ENCODE measurements at regions of chr1 and their contacts with region 1.

Region 1: DNA sequence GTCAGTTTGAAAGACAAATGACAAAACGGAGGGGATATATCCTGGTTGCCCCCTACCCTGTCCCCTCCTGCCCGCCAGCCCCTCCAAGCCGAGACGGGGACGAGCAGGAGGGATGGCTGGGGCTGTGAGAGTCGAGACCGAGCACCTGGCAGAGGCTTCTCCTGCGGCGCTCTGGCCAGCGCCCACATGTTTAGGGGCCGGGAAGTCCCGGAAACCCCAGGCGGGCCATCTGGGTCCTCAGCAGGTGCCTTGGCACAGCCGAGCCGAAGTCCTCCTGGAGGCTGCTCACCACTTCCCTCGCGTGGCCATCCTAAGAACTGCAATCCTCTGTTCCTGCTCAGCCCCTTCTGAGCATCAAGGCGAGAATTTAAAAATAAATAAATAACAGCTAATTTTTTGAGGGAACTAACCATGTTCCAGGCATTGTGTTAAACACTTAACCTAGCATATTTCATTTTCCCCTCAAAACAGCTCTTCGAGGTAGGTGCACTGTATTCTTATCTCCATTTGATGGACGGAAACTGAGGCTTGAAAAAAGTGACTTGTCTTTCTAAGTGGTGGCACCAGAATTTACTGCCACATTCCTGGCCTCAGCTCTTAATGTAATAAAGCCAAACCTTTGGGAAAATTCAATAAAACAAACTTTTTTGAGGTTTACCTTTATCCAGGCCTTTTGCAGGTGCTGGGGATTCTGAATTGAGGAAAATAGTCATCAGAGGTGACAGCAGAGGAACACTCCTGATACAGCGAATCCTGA is 3.5 kb upstream of the RIMS3 start:
- DNase-seq: peak; percentile 95
- H3K4me3 Mint-ChIP-seq: peak overlapping the region; percentile 70
- H3K27ac Mint-ChIP-seq: peak overlapping the region; percentile 15
- H3K4me1 Mint-ChIP-seq: peaks cover 13% of the 10 kb centered on the region
- H3K27me3 Mint-ChIP-seq: peaks cover 14% of the 10 kb centered on the region

Region 2: DNA sequence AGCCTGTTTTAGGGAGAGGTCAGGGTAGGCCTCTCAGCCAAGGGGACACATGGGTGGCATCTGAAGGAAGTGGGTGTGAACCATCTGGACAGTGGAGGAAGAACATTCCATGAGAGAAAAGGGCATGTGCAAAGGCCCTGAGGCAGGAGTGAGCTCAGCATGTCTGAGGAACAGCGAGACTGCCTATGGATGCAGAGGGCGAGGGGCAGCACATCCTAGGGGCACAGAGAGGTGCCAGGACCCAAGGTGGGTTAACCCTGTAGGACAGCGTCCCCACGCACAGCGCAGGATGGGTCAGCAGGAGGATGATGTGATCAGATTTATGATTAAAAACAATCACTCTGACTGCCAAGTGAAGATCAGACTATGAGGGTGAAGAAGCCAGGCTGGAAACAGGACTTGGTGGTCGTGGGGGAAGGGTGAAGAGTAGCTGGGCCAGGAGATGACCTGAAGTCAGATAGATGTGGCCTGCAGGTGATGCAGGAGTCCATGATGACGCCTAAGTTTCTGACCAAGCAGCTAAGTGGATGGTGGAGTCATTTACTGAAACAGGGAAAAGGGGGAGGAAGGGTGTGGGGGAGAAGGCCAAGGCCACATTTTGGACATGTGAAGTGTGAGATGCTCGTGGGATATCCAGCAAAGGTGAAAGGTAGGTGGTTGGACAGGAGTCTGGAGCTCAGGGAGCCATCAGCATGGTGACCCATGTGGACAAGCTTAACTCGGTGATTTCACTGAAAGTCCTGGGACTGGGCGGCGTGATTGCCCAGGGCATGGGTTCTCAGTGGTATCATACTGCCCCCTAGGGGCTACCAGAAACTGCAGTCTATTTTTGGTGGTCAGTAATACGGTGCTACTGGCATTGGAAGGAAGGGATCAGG is 1130.1 kb before region 1 on chr1:
- intact Hi-C with region 1: no loop called
- DNase-seq: peak; percentile 84
- H3K4me3 Mint-ChIP-seq: no peak overlapping the region
- H3K27ac Mint-ChIP-seq: peak overlapping the region; percentile 36
- H3K4me1 Mint-ChIP-seq: peaks cover 2% of the 10 kb centered on the region
- H3K27me3 Mint-ChIP-seq: no peaks in the 10 kb centered on the region

Region 3: DNA sequence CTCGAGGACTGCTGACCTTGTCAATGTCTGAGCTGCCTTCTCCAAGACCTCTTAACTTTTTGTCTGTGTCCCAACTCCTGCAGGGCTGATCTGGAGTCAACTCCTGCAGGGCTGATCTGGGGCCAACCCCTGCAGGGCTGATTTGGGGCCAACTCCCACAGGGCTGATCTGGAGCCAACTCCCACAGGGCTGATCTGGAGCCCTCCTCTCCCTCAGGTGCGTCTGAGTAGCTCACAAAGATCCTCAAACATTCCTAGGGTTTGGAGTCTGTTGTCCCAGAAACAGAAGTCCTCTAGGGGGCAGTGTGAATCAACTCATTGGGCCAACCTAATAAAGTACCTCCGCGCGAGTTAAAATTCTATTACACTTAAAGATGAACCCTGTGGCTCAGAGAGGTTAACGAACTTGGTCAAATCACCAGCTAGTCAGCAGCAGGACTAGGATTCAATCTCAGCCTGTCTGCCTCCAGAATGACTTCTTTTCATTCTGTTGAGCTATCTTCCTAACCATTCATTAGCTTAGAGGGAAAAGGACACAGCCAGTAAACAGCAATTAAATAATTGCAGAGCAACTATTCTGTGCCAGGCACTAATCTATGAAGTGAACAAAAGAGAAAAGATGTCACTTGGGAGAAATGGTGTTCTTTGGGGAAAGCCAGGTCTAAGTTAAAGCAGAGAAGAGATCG is 524.9 kb before region 1 on chr1:
- intact Hi-C with region 1: loop called (anchors 10 kb)
- DNase-seq: peak; percentile 88
- H3K4me3 Mint-ChIP-seq: no peak overlapping the region
- H3K27ac Mint-ChIP-seq: no peak overlapping the region
- H3K4me1 Mint-ChIP-seq: peaks cover 19% of the 10 kb centered on the region
- H3K27me3 Mint-ChIP-seq: peaks cover 54% of the 10 kb centered on the region

Region 4: GRCh38 chr1:40583980-40584379 is 85.0 kb before region 1 on chr1:
- intact Hi-C with region 1: no loop called
- DNase-seq: no peak
- H3K4me3 Mint-ChIP-seq: no peak overlapping the region
- H3K27ac Mint-ChIP-seq: no peak overlapping the region
- H3K4me1 Mint-ChIP-seq: peaks cover 4% of the 10 kb centered on the region
- H3K27me3 Mint-ChIP-seq: peaks cover 18% of the 10 kb centered on the region

Region 5: GRCh38 chr1:40612345-40612831 is 56.6 kb before region 1 on chr1:
- intact Hi-C with region 1: loop called (anchors 1 kb)
- DNase-seq: peak; percentile 93
- H3K4me3 Mint-ChIP-seq: no peak overlapping the region
- H3K27ac Mint-ChIP-seq: no peak overlapping the region
- H3K4me1 Mint-ChIP-seq: no peaks in the 10 kb centered on the region
- H3K27me3 Mint-ChIP-seq: peaks cover 5% of the 10 kb centered on the region

Region 6: GRCh38 chr1:40625066-40625465 is 43.9 kb before region 1 on chr1:
- intact Hi-C with region 1: loop called (anchors 5 kb)
- DNase-seq: no peak
- H3K4me3 Mint-ChIP-seq: no peak overlapping the region
- H3K27ac Mint-ChIP-seq: no peak overlapping the region
- H3K4me1 Mint-ChIP-seq: peaks cover 13% of the 10 kb centered on the region
- H3K27me3 Mint-ChIP-seq: no peaks in the 10 kb centered on the region

Region 7: DNA sequence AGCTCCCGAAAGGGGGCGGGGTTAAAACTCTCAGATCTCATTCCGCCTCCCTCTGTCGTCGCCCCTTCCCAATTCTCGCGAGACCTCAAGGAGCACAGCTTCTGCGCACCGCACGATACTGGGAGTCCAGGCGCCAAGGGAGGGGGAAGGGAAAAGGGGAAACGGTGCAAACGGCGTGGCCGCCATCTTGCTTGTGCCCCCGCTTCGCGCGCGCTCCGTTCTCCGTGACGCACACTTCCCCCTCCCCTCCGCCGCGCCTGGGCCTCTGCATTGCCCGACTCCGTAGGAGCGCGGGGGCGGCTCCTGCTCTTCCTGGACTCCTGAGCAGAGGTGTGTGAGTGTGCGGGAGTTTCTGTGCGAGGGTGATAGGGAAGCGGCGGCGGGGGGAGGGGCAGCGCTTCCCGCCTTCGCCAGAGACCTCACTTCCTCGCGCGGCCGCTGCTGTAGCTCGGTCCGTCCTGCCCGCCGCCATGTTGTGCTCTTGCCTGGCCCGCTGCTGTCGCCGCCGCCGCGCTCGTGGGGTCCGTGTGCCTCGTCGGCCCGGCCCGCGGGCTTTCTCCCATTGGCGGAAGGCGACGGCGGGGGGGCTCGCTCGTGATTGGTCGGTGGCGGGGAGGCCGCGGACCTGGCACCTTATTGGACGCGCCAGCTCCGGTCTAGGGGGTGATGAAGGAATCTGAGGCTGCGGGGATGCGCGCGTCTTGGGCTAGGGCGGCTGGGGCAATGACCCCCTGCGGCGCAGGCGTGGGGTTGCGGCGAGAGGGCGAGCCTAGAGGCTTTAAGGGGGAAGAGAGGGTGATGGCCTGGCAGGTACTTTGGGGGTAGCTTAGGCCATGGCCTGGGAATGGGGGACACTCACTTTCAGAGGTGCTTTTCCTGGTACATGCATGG is 22.8 kb after region 1 on chr1 and contains the start of gene NFYC:
- intact Hi-C with region 1: loop called (anchors 1 kb)
- DNase-seq: peak; percentile 99
- H3K4me3 Mint-ChIP-seq: peak within 1 kb of the TSS; percentile 96
- H3K27ac Mint-ChIP-seq: peak within 1 kb of the TSS; percentile 99
- H3K4me1 Mint-ChIP-seq: peaks cover 49% of the 10 kb centered on the region
- H3K27me3 Mint-ChIP-seq: no peaks in the 10 kb centered on the region
- total RNA-seq, gene NFYC: 66.5 and 73.2 TPM in 2 replicates

Region 8: GRCh38 chr1:40862008-40862863 is 193.3 kb after region 1 on chr1 and contains the start of gene CITED4:
- intact Hi-C with region 1: loop called (anchors 5 kb)
- DNase-seq: peak; percentile 99
- H3K4me3 Mint-ChIP-seq: peak within 1 kb of the TSS; percentile 97
- H3K27ac Mint-ChIP-seq: peak within 1 kb of the TSS; percentile 99
- H3K4me1 Mint-ChIP-seq: peaks cover 16% of the 10 kb centered on the region
- H3K27me3 Mint-ChIP-seq: peaks cover 26% of the 10 kb centered on the region
- total RNA-seq, gene CITED4: 5.5 and 6.0 TPM in 2 replicates

Measured in activated CD4-positive, alpha-beta T cell treated with anti-CD3 and anti-CD28 coated beads, Interleukin-2, amount 10 ng/mL, durations not matched to agents 24 days and 14 days (primary cell).